Prostate gland (tissue), 2 donors: ENCODE measurements at regions of chr5 and their contacts with region 1.

Region 1: DNA sequence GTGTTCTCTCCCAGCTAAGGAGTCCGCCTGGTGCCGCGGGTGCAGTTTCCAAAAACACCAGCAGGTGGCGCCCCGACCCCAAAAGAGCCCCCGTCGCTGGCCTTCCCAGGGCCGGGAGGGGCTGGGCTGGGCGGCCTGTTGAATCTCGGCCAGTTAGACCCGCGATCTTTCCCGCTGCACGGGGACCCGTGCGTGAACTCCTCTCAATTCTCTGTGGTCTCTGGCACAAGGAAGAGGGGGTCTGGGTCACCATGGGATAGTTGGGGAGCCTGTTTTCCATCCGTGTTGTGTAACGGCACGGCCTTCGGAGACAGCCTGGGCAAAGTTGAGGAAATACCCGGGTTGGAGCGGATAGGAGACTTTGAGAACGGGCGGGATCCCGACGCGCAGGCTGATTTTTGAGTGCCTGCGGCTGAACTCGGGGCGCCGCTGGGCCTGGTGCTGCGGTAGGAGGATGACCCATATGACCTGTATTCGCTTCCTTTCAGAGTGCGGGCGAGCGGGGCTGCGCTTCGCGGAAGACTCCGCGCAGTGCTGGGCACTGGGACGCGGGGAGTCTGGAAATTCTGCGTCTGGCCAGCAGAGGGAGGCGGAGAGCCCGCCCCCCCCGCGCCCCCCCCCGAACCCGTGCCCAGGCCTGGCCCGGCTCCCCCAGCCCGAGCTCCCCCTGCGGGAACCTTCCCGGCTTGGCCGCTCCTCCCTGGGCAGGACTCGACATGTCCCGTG is 7.9 kb upstream of the PSD2 start:
- DNase-seq: peak; percentile 78
- H3K4me3 ChIP-seq: peak overlapping the region; percentile 40 to 51
- H3K27ac ChIP-seq: peak overlapping the region; percentile 74 to 78
- H3K4me1 ChIP-seq: no peaks in the 10 kb centered on the region
- H3K27me3 ChIP-seq: no peaks in the 10 kb centered on the region
- CTCF ChIP-seq: peak; percentile 84 to 99 (median 96)
- POLR2A ChIP-seq: no peak

Region 2: GRCh38 chr5:139262742-139263445 is 524.8 kb before region 1 on chr5:
- intact Hi-C with region 1: no loop called
- DNase-seq: peak; percentile 83
- H3K4me3 ChIP-seq: no peak overlapping the region
- H3K27ac ChIP-seq: peak overlapping the region in 1 of 2 donors; percentile 27
- H3K4me1 ChIP-seq: no peaks in the 10 kb centered on the region
- H3K27me3 ChIP-seq: no peaks in the 10 kb centered on the region
- CTCF ChIP-seq: peak; percentile 65 to 93 (median 86)
- POLR2A ChIP-seq: no peak

Region 3: GRCh38 chr5:139844472-139845145 is 56.9 kb after region 1 on chr5:
- intact Hi-C with region 1: loop called (anchors 5 kb)
- DNase-seq: peak; percentile 47
- H3K4me3 ChIP-seq: no peak overlapping the region
- H3K27ac ChIP-seq: no peak overlapping the region
- H3K4me1 ChIP-seq: no peaks in the 10 kb centered on the region
- H3K27me3 ChIP-seq: no peaks in the 10 kb centered on the region
- CTCF ChIP-seq: peak; percentile 20 to 69 (median 53)
- POLR2A ChIP-seq: no peak

Region 4: GRCh38 chr5:139863855-139864558 is 76.3 kb after region 1 on chr5:
- intact Hi-C with region 1: loop called (anchors 1 kb)
- DNase-seq: peak; percentile 62
- H3K4me3 ChIP-seq: no peak overlapping the region
- H3K27ac ChIP-seq: peak overlapping the region; percentile 31 to 62
- H3K4me1 ChIP-seq: peaks cover 4% of the 10 kb centered on the region
- H3K27me3 ChIP-seq: no peaks in the 10 kb centered on the region
- CTCF ChIP-seq: peak; percentile 75 to 87 (median 80)
- POLR2A ChIP-seq: no peak

Region 5: GRCh38 chr5:139968547-139969261 is 181.0 kb after region 1 on chr5:
- intact Hi-C with region 1: loop called (anchors 1 kb)
- DNase-seq: peak; percentile 90
- H3K4me3 ChIP-seq: no peak overlapping the region
- H3K27ac ChIP-seq: no peak overlapping the region
- H3K4me1 ChIP-seq: no peaks in the 10 kb centered on the region
- H3K27me3 ChIP-seq: no peaks in the 10 kb centered on the region
- CTCF ChIP-seq: peak; percentile 97 to 100 (median 100)
- POLR2A ChIP-seq: no peak

Region 6: GRCh38 chr5:140157032-140157803 is 369.5 kb after region 1 on chr5:
- intact Hi-C with region 1: loop called (anchors 5 kb)
- DNase-seq: peak; percentile 86
- H3K4me3 ChIP-seq: peak overlapping the region; percentile 5 to 8
- H3K27ac ChIP-seq: peak overlapping the region in 1 of 2 donors; percentile 0
- H3K4me1 ChIP-seq: peaks cover 3% of the 10 kb centered on the region
- H3K27me3 ChIP-seq: no peaks in the 10 kb centered on the region
- CTCF ChIP-seq: peak; percentile 83 to 93 (median 92)
- POLR2A ChIP-seq: no peak